Mammary epithelial cell (primary cell): ENCODE measurements at regions of chr22 and their contacts with region 1.

Region 1: DNA sequence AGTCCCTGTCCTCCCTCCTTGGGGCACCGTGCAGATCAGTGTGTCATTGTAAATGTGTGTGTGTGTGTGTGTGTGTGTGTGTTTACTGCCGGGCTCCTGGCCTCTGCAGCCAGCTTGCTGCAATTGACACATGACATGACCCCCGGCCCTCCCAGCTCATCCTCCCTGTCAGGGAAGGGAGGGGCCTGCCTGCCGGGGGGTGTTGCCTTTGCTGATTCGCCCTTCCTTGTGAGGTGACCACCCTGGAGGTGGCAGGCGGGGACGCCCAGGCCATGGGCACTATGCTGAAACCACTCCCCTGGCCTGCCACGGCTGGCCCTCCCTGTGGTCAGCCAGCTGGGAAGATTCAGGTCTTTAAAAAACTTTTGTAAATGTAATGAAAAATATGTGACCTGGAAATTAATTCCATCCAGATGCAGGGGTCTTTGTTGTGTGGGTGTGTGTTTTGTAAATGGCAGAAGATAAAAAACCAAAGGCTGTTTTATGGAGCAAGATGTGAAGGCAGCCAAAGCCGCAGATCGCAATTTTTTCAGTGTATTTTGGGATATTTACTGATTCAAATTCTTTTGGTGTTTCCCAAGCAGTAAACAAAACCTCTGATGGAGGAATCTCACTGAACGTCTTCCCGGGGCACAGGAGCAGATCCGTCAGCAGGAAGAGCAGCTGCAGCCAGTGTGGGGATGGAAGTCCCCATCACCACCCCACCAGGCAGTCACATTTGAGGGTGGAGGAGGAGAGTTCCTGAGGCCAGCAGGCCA is 23.2 kb downstream of the SHISAL1 start:
- DNase-seq: no peak
- H3K4me3 ChIP-seq: no peak overlapping the region
- H3K27ac ChIP-seq: no peak overlapping the region
- H3K4me1 ChIP-seq: peaks cover 5% of the 10 kb centered on the region
- H3K27me3 ChIP-seq: no peaks in the 10 kb centered on the region
- CTCF ChIP-seq: no peak

Region 2: GRCh38 chr22:44159221-44159620 is 130.4 kb before region 1 on chr22:
- CTCF ChIA-PET with region 1: no interaction called
- dilution Hi-C with region 1: loop called (anchors 10 kb)
- in situ Hi-C with region 1: no loop called
- intact Hi-C with region 1: no loop called
- DNase-seq: no peak
- H3K4me3 ChIP-seq: no peak overlapping the region
- H3K27ac ChIP-seq: no peak overlapping the region
- H3K4me1 ChIP-seq: no peaks in the 10 kb centered on the region
- H3K27me3 ChIP-seq: no peaks in the 10 kb centered on the region
- CTCF ChIP-seq: no peak

Region 3: GRCh38 chr22:44211946-44212930 is 77.4 kb before region 1 on chr22:
- CTCF ChIA-PET with region 1: no interaction called
- dilution Hi-C with region 1: loop called (anchors 10 kb)
- in situ Hi-C with region 1: no loop called
- intact Hi-C with region 1: no loop called
- DNase-seq: no peak
- H3K4me3 ChIP-seq: no peak overlapping the region
- H3K27ac ChIP-seq: no peak overlapping the region
- H3K4me1 ChIP-seq: no peaks in the 10 kb centered on the region
- H3K27me3 ChIP-seq: peaks cover 8% of the 10 kb centered on the region
- CTCF ChIP-seq: no peak

Region 4: DNA sequence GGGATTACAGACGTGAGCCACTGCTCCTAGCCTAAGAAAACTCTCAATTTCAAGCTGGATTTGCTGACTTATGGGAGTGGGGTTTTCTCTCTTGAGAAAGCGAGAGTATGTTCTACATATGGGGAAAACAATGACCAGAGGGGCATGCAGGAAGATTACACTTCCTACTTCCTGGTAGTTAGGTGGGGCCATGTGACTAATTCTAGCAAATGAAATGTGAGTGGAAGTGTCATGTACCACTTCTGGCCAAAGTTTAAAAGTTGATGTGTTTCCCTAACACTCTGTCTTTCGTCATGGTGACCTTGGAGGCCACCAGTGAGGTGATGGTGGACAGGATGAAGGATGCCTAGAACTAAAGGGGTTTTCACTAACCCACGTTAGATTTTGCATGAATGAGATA is 58.4 kb before region 1 on chr22:
- CTCF ChIA-PET with region 1: no interaction called
- dilution Hi-C with region 1: loop called (anchors 5 kb)
- in situ Hi-C with region 1: no loop called
- intact Hi-C with region 1: no loop called
- DNase-seq: no peak
- H3K4me3 ChIP-seq: no peak overlapping the region
- H3K27ac ChIP-seq: no peak overlapping the region
- H3K4me1 ChIP-seq: no peaks in the 10 kb centered on the region
- H3K27me3 ChIP-seq: no peaks in the 10 kb centered on the region
- CTCF ChIP-seq: no peak

Region 5: DNA sequence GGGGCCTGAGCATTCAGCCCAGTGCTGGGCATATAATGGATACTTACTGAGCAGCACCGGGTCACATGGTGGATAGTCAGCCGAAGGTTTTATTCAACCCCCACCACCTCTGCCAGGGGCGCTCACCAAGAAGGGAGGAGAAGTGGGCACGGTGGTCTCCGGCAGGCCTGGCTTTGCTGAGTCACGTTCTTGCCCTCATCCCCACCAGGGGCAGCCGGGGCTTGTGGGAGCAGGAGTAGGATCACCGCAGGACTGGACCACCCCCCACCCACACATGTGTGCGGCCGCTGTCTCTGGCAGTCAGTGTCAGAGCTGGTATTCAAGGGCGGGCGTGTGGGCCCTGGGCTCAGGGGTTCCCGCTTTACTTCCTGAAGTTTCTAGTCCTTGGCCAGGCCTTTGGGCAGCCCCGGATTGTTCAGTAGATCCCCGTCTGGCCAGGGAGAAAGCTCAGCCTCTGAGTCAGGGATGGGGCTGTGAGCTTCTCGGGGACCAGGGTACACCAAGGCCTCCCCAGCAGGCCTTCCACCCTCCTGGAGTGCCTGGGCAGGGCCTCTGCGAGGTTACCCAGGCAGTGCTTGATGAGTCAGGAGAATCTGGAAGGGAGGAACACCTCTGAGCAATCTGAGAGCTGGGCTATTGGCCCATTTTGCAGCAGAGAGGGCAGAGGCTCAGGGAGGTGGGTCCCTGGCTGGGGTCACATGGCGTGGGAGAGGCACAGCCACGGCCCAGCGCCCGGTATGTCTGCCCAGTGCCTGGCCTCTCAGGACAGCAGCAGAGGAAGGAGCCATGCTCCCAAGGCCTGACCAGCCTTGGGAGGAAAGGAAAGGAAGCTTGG is 147.8 kb after region 1 on chr22:
- CTCF ChIA-PET with region 1: no interaction called
- dilution Hi-C with region 1: loop called (anchors 10 kb)
- in situ Hi-C with region 1: no loop called
- intact Hi-C with region 1: no loop called
- DNase-seq: no peak
- H3K4me3 ChIP-seq: no peak overlapping the region
- H3K27ac ChIP-seq: no peak overlapping the region
- H3K4me1 ChIP-seq: no peaks in the 10 kb centered on the region
- H3K27me3 ChIP-seq: no peaks in the 10 kb centered on the region
- CTCF ChIP-seq: no peak